ENCODE measurements at regions of chr6 and their contacts with region 1.

Region 1: DNA sequence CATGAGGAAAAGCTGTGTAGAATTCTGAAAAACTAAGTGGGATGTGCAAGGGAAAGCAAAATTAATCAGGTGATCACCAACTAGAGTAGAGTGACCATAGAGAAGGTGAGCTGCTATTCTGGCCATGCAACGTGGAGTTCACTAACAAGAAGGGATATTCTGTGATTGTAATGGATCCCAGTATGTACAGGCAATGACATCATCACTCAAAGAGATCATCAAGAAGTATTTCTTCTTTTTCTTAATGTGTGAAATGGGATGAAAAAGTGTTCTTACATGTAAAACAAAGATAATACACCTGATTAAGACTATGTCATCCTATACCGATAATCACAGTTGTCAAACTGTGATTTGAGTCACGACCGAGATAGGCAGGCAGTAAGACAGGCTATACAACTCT is 101.2 kb downstream of the SMPDL3A start:
- DNase-seq: no peak
- H3K4me3 ChIP-seq: no peak overlapping the region
- H3K27ac ChIP-seq: no peak overlapping the region
- H3K4me1 ChIP-seq: no peaks in the 10 kb centered on the region
- H3K27me3 ChIP-seq: no peaks in the 10 kb centered on the region
- CTCF ChIP-seq: no peak
- POLR2A ChIP-seq: no peak

Region 2: DNA sequence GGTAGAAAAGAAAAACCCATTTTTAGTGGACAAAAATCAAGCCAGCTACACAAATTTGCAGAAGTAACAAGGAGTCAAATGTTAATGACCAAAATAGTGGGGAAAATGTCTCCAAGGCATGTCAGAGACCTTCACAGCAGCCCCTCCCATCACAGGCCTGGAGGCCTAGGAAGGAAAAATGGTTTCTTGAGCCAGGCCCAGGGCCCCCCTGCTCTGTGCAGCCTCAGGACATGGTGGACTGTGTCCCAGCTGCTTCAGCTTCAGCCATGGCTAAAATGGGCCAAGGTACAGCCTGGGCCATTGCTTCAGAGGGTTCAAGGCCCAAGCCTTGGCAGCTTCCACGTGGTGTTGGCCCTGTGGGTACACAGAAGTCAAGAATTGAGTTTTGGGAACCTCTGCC is 23.3 kb after region 1 on chr6:
- intact Hi-C with region 1: loop called (anchors 1 kb)
- DNase-seq: no peak
- H3K4me3 ChIP-seq: no peak overlapping the region
- H3K27ac ChIP-seq: no peak overlapping the region
- H3K4me1 ChIP-seq: no peaks in the 10 kb centered on the region
- H3K27me3 ChIP-seq: no peaks in the 10 kb centered on the region
- CTCF ChIP-seq: no peak
- POLR2A ChIP-seq: no peak

Measured in vagina (tissue), 2 donors.